ENCODE measurements at regions of chr18 and their contacts with region 1.

Region 1: DNA sequence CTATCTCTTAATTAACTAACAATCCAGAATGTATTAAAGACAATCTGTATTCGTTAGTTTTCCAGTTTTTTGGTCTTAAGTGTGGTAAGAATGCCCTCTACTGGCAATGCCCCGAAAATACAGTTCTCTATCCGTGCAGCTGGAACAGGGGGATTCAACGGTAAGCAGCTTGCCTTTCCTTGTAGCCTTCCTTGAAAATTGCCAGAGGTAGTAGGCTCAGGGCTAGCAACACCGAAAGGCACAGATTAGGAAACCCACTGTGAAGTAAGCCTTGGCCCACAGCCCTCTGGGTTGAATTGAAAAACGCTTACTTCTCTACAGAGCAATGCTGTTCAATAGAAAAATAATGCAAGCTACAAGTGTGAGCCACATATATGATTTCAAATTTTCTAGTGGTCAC is 17.1 kb upstream of the VPS4B start:
- DNase-seq: peak; percentile 63
- CTCF ChIP-seq: peak; percentile 85

Region 2: DNA sequence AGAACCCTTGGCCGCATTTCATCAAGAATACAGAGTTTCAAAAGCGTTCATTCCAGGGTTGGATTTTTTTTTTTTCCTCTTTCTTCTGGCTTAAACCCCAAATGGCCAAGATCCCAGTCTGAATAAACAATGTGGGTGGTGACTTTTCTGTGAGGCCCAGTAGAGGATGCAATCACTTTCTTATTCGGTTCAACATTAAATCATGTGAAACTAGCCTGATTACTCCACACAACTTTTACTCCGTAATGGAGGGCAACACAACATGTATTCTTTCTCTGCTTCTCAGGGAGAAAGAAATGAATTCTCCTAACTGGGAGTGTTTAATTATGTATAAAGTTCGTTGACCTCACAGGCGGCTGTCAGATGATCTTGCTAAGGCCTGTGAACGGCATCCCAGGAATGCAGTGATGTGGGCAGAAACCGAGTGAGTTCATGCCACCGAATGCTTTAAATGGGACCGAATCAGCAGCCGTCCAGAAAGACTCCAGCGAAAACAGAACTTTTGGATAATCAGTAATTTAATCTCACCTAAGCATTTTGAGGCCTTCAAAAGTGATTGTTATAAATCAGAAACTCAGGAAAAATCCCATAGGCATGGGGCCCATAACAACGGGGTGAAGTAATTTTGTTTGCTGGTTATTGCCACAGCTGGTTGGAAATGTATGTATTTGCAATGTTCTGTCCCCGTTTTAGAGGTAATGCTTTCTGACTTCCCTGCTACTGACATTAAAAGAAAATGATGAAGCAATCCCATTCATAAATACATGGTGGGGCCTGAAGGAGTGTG is 201.3 kb before region 1 on chr18:
- CTCF ChIA-PET with region 1: no interaction called
- POLR2A ChIA-PET with region 1: no interaction called
- DNase-seq: no peak
- CTCF ChIP-seq: no peak

Region 3: GRCh38 chr18:63339920-63340484 is 99.3 kb before region 1 on chr18:
- CTCF ChIA-PET with region 1: interaction called, 50 read pairs
- POLR2A ChIA-PET with region 1: no interaction called
- DNase-seq: no peak
- CTCF ChIP-seq: peak; percentile 28

Region 4: GRCh38 chr18:63410792-63411191 is 28.5 kb before region 1 on chr18:
- CTCF ChIA-PET with region 1: interaction called, 11 read pairs
- POLR2A ChIA-PET with region 1: no interaction called
- DNase-seq: no peak
- CTCF ChIP-seq: no peak

Region 5: DNA sequence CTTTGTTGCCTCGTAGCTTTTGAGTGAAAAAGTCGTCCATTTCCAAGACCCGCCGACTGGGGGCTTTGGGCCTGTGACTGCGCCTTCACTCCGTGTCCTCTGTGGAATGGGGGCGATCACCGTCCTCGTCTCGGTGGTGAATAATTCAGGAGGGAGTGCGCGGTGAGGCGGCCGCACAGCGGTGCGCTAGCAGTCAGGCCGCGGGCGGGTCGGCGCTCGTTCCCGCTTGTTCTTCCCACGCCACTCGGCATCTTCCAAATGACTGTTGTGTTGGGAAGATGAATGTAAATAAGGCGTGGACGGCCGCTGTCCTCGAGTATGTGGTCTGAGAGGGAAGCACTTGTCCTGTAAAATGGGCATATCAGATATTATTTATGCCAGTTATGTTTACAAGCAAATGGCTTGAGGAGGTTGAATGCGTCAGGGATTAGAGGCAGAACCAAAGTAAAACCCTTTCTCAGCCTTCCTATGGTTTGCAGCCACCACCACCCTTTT is 16.5 kb before region 1 on chr18:
- CTCF ChIA-PET with region 1: interaction called, 68 read pairs
- POLR2A ChIA-PET with region 1: no interaction called
- DNase-seq: no peak
- CTCF ChIP-seq: no peak

Region 6: DNA sequence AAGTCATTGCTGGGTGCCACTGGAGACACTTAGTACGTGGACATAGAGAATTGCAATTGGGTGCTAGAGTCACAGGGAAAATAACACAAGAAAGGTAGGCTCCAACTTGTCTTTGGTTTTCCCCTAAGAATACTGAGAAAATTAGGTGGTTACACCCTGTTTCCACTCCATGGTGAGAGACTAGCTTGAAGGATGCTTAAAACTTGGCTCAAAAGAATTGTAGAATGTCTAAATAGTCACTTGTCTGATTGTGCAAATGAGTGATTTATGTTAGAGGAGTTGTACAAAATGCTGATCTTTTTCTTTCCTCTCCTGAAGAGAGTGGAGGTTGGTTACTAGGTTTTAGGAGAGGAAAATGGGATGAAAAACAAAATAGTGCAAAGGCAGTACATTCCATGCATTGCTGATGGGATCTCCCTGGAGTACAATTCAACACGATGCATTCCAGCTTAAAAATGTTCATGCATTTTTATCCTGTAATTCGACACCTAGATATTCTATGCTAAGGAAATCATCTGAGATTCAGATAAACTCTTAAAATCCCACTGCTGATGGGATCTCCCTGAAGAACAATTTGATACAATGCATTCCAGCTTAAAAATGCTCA is 100.7 kb after region 1 on chr18:
- CTCF ChIA-PET with region 1: no interaction called
- POLR2A ChIA-PET with region 1: no interaction called
- DNase-seq: no peak
- CTCF ChIP-seq: no peak